ENCODE measurements at regions of chrX and their contacts with region 1.

Region 1: GRCh38 chrX:149512225-149512885 is 7.2 kb upstream of the IDS start:
- DNase-seq: peak; percentile 35
- H3K4me3 ChIP-seq: no peak overlapping the region
- H3K27ac ChIP-seq: no peak overlapping the region
- H3K4me1 ChIP-seq: peaks cover 21% of the 10 kb centered on the region
- H3K27me3 ChIP-seq: no peaks in the 10 kb centered on the region
- CTCF ChIP-seq: peak; percentile 29 to 66

Region 2: DNA sequence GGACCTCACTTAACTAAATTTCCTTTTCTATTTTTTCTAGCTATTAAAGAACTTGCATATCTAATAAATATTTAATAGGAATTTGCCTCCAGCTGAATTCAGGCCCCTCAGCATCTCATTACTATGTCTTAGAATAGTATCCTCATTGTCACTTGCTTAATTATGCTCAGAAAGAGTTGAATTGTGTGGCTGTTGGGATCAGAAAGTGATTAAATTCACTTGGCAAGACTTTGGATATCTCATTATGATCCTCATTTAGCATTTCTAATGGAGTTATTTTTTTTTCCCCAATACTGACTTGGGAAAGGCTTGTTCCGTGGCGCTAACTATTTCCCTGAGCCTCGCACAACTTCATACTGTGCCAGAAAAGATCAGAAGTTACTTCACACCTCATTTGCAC is 166.0 kb before region 1 on chrX:
- CTCF ChIA-PET with region 1: no interaction called
- dilution Hi-C with region 1: no loop called
- in situ Hi-C with region 1: no loop called
- intact Hi-C with region 1: no loop called
- DNase-seq: no peak
- H3K4me3 ChIP-seq: no peak overlapping the region
- H3K27ac ChIP-seq: no peak overlapping the region
- H3K4me1 ChIP-seq: no peaks in the 10 kb centered on the region
- H3K27me3 ChIP-seq: no peaks in the 10 kb centered on the region
- CTCF ChIP-seq: no peak

Region 3: GRCh38 chrX:149648932-149649331 is 136.6 kb after region 1 on chrX:
- CTCF ChIA-PET with region 1: no interaction called
- dilution Hi-C with region 1: no loop called
- in situ Hi-C with region 1: loop called in 1 of 2 experiments (anchors 25 kb)
- intact Hi-C with region 1: loop called (anchors 10 kb)
- DNase-seq: no peak
- H3K4me3 ChIP-seq: no peak overlapping the region
- H3K27ac ChIP-seq: no peak overlapping the region
- H3K4me1 ChIP-seq: no peaks in the 10 kb centered on the region
- H3K27me3 ChIP-seq: no peaks in the 10 kb centered on the region
- CTCF ChIP-seq: peak in 1 of 2 donors; percentile 29

Region 4: DNA sequence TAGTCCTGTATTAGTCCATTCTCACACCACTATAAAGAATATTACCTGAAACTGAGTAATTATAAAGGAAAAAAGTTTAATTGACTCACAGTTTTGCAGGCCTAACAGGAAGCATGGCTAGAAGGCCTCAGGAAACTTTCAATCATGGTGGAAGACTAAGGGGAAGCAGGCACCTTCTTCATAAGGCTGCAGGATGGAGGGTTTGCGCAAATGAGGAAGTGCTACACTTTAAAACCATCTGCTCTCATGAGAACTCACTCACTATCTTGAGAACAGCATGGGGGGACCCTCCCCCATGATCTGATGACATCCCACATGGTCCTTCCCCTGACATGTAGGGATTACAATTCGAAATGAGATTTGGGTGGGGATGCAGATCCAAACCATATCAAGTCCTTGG is 187.4 kb after region 1 on chrX:
- CTCF ChIA-PET with region 1: no interaction called
- dilution Hi-C with region 1: no loop called
- in situ Hi-C with region 1: no loop called
- intact Hi-C with region 1: no loop called
- DNase-seq: no peak
- H3K4me3 ChIP-seq: no peak overlapping the region
- H3K27ac ChIP-seq: no peak overlapping the region
- H3K4me1 ChIP-seq: no peaks in the 10 kb centered on the region
- H3K27me3 ChIP-seq: no peaks in the 10 kb centered on the region
- CTCF ChIP-seq: no peak